ENCODE measurements at regions of chr1 and their contacts with region 1.

Region 1: GRCh38 chr1:207811920-207812720 is 60.3 kb downstream of the CD46 start:
- DNase-seq: no peak
- H3K4me3 ChIP-seq: no peak overlapping the region
- CTCF ChIP-seq: peak; percentile 24

Region 2: DNA sequence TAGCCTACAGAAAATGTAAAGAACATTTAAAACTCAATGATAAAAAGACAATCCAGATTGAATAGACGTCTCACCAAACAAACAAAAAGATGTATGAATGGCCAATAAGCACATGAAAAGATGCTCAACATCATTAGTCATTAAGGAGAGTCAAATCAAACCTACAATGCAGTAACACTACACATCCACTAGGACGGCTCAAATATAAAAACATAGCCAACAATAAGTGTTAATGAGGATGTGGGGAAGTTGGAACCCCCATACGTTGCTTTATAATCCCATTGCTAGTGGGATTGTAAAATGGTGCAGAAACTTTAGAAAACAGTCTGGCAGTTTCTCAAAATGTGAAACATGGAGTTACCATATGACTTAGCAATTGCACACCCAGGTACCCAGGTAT is 929.6 kb before region 1 on chr1:
- CTCF ChIA-PET with region 1: no interaction called
- POLR2A ChIA-PET with region 1: no interaction called
- DNase-seq: no peak
- H3K4me3 ChIP-seq: no peak overlapping the region
- CTCF ChIP-seq: no peak

Region 3: GRCh38 chr1:207145401-207146058 is 666.6 kb before region 1 on chr1:
- CTCF ChIA-PET with region 1: no interaction called
- POLR2A ChIA-PET with region 1: no interaction called
- DNase-seq: no peak
- H3K4me3 ChIP-seq: no peak overlapping the region
- CTCF ChIP-seq: no peak

Region 4: GRCh38 chr1:207565546-207566358 is 246.4 kb before region 1 on chr1:
- CTCF ChIA-PET with region 1: no interaction called
- POLR2A ChIA-PET with region 1: no interaction called
- DNase-seq: no peak
- H3K4me3 ChIP-seq: no peak overlapping the region
- CTCF ChIP-seq: no peak

Region 5: GRCh38 chr1:207822602-207823451 is 10.7 kb after region 1 on chr1:
- CTCF ChIA-PET with region 1: interaction called, 14 read pairs
- POLR2A ChIA-PET with region 1: no interaction called
- DNase-seq: no peak
- H3K4me3 ChIP-seq: no peak overlapping the region
- CTCF ChIP-seq: no peak